ENCODE measurements at regions of chr3 and their contacts with region 1.

Region 1: DNA sequence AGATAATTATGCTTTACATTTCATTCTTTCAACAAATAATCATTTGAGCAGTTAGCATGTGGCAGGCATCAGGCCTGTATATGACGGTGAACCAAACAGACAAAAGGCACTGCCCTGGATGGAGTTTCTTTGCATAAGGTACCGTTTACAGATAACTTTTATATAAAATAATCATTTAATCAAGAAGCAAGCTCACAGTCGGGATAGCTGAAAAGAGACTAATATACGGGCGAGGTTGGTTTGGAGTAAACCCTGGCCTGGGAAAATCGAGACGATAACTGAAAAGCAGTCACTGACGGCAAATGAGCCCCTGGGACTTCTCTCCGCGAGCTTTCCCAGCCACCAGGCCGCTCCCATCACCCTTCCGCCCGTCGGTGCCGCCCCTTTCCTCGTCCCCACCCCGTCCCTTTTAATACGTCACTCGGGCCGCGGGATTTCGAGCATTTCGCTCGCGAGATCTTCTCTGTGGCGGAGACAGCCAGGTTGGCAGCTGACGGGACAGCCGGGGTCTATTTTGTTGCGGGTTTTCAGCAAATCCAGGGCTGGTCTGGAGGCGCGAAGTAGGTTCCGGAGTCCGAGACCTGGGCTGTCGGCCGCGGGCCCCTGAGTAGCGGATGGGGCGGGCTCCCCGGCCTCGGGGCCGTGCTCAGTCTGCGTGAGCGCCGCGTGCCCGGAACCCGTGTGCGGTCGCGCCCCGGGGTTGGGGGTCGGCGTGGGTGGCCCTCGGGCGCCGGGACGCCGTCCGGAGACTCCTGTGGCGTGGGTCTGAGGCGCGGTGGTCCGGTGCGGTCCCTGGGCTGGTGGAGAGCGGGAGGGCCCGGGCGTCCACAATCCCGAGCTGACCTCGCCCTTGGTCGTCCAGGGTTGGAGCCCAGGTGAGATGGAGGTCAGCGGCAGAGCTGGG is at the start of gene NMD3:
- DNase-seq: peak; percentile 91
- H3K4me3 ChIP-seq: peak within 1 kb of the TSS; percentile 93 to 97 (median 96)
- H3K27ac ChIP-seq: peak within 1 kb of the TSS; percentile 93
- H3K4me1 ChIP-seq: peaks cover 10% of the 10 kb centered on the region
- H3K27me3 ChIP-seq: no peaks in the 10 kb centered on the region
- CTCF ChIP-seq: no peak
- total RNA-seq, gene NMD3: 74.4 to 112 TPM

Region 2: GRCh38 chr3:161244538-161244937 is 23.4 kb after region 1 on chr3:
- CTCF ChIA-PET with region 1: no interaction called
- dilution Hi-C with region 1: no loop called
- in situ Hi-C with region 1: no loop called
- intact Hi-C with region 1: loop called (anchors 2 kb)
- DNase-seq: no peak
- H3K4me3 ChIP-seq: no peak overlapping the region
- H3K27ac ChIP-seq: no peak overlapping the region
- H3K4me1 ChIP-seq: no peaks in the 10 kb centered on the region
- H3K27me3 ChIP-seq: no peaks in the 10 kb centered on the region
- CTCF ChIP-seq: no peak

Region 3: GRCh38 chr3:161349529-161350278 is 128.6 kb after region 1 on chr3:
- CTCF ChIA-PET with region 1: no interaction called
- dilution Hi-C with region 1: no loop called
- in situ Hi-C with region 1: no loop called
- intact Hi-C with region 1: no loop called
- DNase-seq: peak; percentile 98
- H3K4me3 ChIP-seq: no peak overlapping the region
- H3K27ac ChIP-seq: no peak overlapping the region
- H3K4me1 ChIP-seq: peaks cover 25% of the 10 kb centered on the region
- H3K27me3 ChIP-seq: no peaks in the 10 kb centered on the region
- CTCF ChIP-seq: no peak

Measured in mammary epithelial cell (primary cell).